ENCODE measurements at regions of chr13 and their contacts with region 1.

Region 1: GRCh38 chr13:110683203-110683883 is 22.6 kb downstream of the CARS2 start:
- DNase-seq: peak in 1 of 2 donors; percentile 46
- H3K4me3 ChIP-seq: no peak overlapping the region
- H3K27ac ChIP-seq: no peak overlapping the region
- H3K4me1 ChIP-seq: no peaks in the 10 kb centered on the region
- H3K27me3 ChIP-seq: no peaks in the 10 kb centered on the region
- CTCF ChIP-seq: peak in 1 of 3 experiments; percentile 22

Region 2: DNA sequence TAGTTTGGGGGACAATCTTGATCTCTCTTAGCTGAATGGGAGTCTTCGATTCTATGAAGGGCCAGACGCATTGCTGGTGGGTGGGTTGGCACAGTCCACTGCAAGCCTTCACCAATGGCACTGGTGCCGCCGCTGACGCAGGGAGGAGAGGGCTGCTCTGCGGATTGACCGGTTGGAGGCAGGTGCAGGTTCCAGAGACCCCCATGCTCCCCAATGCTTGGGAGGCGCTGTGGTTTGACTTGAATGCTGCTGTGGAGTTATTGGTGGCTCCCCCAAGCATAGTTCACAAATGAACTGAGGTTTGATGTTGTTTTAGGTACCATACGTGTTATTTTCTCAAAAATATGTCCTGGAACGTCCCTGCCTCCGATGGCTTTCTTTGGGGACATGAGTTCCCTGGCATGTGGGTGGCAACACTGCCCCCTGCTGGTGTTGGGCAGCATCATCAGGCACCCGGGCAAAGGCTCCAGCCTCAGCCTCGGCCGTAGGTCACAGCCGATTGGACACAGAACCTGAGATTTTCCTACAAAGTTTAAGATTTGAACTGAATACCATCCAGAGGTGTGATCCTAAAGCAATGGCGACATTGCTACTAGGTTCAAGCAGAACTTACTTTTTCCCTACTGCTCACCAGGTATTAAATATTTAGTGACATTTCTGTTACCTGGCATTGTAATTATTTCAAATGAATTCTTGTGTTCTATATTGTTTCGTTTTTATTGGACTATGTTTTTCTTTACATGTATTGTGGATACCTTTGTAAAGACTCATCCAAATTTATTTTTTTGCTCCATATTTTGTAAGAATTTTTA is 136.1 kb after region 1 on chr13:
- intact Hi-C with region 1: loop called (anchors 1 kb)
- DNase-seq: peak in 1 of 2 donors; percentile 88
- H3K4me3 ChIP-seq: no peak overlapping the region
- H3K27ac ChIP-seq: no peak overlapping the region
- H3K4me1 ChIP-seq: peaks cover 0 to 2% of the 10 kb centered on the region in 2 donors
- H3K27me3 ChIP-seq: no peaks in the 10 kb centered on the region
- CTCF ChIP-seq: peak; percentile 88 to 97 (median 97)